Naive thymus-derived CD4-positive, alpha-beta T cell (primary cell): ENCODE measurements at regions of chr17 and their contacts with region 1.

Region 1: GRCh38 chr17:4215882-4216570 is 47.8 kb downstream of the ANKFY1 start:
- DNase-seq: no peak
- ATAC-seq: no peak
- H3K4me3 ChIP-seq: no peak overlapping the region
- H3K4me3 Mint-ChIP-seq: no peak overlapping the region
- H3K27ac ChIP-seq: no peak overlapping the region
- H3K27ac Mint-ChIP-seq: peak overlapping the region in 5 of 9 donors; percentile 3 to 82 (median 75)
- H3K4me1 ChIP-seq: no peaks in the 10 kb centered on the region
- H3K4me1 Mint-ChIP-seq: peaks cover 7 to 13% (median 11%) of the 10 kb centered on the region in 7 donors
- H3K27me3 ChIP-seq: no peaks in the 10 kb centered on the region
- H3K27me3 Mint-ChIP-seq: no peaks in the 10 kb centered on the region

Region 2: DNA sequence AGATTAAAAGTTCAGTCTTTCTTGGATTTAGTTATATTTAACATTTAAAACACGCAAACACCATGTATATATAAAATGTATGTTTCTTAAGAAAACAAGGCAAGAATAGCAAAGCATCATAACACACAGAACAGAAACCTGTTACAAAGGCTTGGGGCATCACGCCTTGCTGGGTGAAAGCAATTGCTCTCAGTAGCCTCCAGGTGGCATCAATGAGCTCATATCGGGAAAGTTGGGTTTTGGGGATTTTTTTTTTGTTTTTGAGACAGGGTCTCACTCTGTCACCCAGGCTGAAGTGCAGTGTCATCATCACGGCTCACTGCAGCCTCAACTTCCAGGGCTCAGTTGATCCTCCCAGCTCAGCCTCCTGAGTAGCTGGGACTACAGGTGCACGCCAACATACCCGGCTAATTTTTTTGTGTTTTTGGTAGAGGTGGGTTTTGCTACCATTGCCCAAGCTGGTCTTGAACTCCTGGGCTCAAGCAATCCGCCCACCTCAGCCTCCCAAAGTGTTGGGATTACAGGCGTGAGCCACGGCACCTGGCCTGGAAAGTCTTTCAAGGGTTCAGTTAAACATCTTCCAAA is 16.1 kb before region 1 on chr17:
- CTCF ChIA-PET with region 1: interaction called, 7 read pairs
- POLR2A ChIA-PET with region 1: no interaction called
- intact Hi-C with region 1: loop called in 1 of 2 experiments (anchors 2 kb)
- DNase-seq: peak in 5 of 9 donors; percentile 36 to 49 (median 41)
- ATAC-seq: peak; percentile 75
- H3K4me3 ChIP-seq: no peak overlapping the region
- H3K4me3 Mint-ChIP-seq: no peak overlapping the region
- H3K27ac ChIP-seq: no peak overlapping the region
- H3K27ac Mint-ChIP-seq: peak overlapping the region in 1 of 9 donors; percentile 28
- H3K4me1 ChIP-seq: no peaks in the 10 kb centered on the region
- H3K4me1 Mint-ChIP-seq: peaks cover 0 to 10% (median 0%) of the 10 kb centered on the region in 7 donors
- H3K27me3 ChIP-seq: no peaks in the 10 kb centered on the region
- H3K27me3 Mint-ChIP-seq: no peaks in the 10 kb centered on the region

Region 3: DNA sequence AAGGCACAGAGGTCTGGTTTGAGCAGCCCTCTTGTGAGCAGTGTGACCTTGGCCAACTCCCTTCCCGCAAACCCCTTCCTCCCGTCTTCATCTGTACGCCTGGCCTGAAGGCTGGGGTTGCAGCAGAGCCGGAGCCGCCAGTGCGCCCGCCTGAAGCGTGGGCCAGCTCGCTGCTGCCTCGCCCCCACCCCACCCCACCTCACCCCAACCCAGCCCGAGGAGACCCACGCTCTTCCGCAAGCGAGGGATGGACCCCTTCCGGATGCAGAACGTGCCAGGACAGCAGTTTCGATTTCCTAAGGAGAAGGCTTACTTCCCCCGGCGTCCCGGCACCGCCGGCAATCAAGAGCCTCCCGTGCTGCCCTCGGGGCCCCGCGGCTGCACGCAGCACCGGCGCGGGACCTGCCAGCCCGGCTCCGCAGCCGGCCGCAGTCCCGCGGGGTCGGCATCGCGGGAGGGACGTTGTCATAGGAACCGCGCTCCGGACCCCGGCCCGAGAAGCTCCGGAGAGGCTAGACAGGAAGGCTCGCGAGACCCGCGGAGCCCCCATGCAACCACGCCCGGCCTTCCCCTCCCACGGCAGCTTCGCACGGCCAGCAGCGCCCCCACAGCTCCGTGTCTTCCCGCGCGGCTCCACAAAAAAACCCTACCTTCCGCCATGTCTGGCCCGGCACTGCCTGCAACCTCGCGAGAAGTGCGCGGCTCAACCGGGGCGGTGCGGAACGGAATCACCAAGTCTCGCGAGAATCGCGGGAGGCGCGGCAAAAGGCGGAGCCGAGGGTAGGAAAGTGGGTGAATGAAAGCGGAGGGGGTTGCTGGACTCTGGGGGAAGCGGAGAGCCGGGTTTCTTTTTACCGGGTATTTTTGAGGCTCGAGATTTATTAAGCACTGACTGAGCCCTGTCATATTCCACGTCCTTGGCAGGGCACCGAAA is 47.5 kb after region 1 on chr17 and contains the start of gene ANKFY1:
- CTCF ChIA-PET with region 1: interaction called, 3 read pairs
- POLR2A ChIA-PET with region 1: no interaction called
- intact Hi-C with region 1: loop called (anchors 1 to 5 kb)
- DNase-seq: peak; percentile 95 to 99 (median 97)
- ATAC-seq: peak; percentile 98
- H3K4me3 ChIP-seq: peak within 1 kb of the TSS; percentile 73
- H3K4me3 Mint-ChIP-seq: peak within 1 kb of the TSS; percentile 89 to 99 (median 94)
- H3K27ac ChIP-seq: peak within 1 kb of the TSS; percentile 94
- H3K27ac Mint-ChIP-seq: peak within 1 kb of the TSS; percentile 82 to 98 (median 95)
- H3K4me1 ChIP-seq: peaks cover 16 to 17% of the 10 kb centered on the region in 2 donors
- H3K4me1 Mint-ChIP-seq: peaks cover 27 to 49% (median 41%) of the 10 kb centered on the region in 7 donors
- H3K27me3 ChIP-seq: no peaks in the 10 kb centered on the region
- H3K27me3 Mint-ChIP-seq: no peaks in the 10 kb centered on the region
- total RNA-seq, gene ANKFY1: 52.4 to 84.5 (median 69.7) TPM

Region 4: DNA sequence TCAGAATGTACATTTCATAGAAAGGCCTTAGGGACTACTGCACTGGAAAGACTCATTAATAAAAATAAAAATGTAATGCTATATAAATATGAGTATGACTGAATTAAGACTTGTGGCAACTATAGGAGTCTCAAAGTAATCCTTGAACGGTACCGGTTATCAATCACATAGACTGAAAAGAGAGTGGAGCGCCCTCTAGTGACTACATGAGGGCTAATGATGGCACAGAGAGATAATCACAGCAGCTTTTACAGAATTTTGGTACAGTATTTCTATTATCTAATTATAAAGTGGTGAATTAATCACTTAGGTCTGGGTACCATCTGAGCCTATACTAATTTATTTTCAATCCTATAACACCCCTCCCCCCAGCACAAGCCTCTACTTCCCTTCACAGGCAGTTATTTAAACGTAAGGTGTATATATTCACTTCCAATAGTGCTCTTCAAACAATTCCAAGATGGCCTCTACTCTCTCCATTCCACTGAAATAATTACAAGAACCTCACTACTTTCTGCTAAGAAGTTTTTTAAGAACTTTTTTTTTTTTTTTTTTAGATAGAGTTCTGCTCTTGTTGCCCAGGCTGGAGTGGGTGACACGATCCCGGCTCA is 88.5 kb after region 1 on chr17:
- CTCF ChIA-PET with region 1: interaction called, 4 read pairs
- POLR2A ChIA-PET with region 1: no interaction called
- intact Hi-C with region 1: loop called (anchors 1 kb)
- DNase-seq: peak in 8 of 9 donors; percentile 20 to 66 (median 52)
- ATAC-seq: peak; percentile 90
- H3K4me3 ChIP-seq: no peak overlapping the region
- H3K4me3 Mint-ChIP-seq: no peak overlapping the region
- H3K27ac ChIP-seq: no peak overlapping the region
- H3K27ac Mint-ChIP-seq: no peak overlapping the region
- H3K4me1 ChIP-seq: peaks cover 6 to 9% of the 10 kb centered on the region in 2 donors
- H3K4me1 Mint-ChIP-seq: peaks cover 14 to 33% (median 23%) of the 10 kb centered on the region in 7 donors
- H3K27me3 ChIP-seq: no peaks in the 10 kb centered on the region
- H3K27me3 Mint-ChIP-seq: no peaks in the 10 kb centered on the region